ENCODE measurements at regions of chr2 and their contacts with region 1.

Region 1: GRCh38 chr2:158456309-158457066 is at the starts of genes CCDC148 and PKP4:
- DNase-seq: peak; percentile 93
- H3K4me3 Mint-ChIP-seq: peak within 1 kb of the TSS; percentile 91
- H3K27ac Mint-ChIP-seq: peak within 1 kb of the TSS; percentile 81
- H3K4me1 Mint-ChIP-seq: peaks cover 21% of the 10 kb centered on the region
- H3K27me3 Mint-ChIP-seq: no peaks in the 10 kb centered on the region
- CTCF ChIP-seq: no peak
- total RNA-seq, gene CCDC148: 4.3 and 5.1 TPM in 2 replicates
- total RNA-seq, gene PKP4: 119 and 137 TPM in 2 replicates

Region 2: DNA sequence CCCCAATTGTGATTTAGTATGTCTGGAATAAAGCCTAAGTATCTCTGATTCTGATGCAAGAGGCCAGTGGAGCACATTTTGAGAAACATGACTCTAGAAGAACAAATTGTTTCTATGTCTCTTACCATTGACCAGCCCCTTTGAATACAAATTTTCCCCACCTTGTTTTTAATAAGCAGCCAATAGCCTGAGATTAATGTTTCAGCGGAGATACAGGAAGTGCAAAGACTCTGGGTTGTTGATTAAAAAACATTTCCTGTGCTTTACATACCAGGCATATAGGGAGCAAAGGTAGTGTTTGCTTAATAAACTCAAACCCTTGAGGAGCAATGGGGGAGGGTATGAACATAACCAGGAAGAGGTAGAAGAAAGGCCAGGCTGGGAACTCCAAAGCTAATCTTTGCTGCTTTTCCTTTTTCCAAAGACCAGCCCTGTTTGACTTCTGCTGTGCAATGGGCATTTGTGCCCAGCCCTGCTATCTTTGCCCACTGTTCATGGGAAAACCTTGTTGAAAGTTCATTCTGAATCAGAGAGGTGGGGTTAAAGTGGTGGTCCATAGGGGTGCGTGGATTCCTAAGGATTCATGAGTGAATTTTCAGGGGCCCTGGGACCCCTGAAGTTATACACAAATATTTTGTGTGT is 325.5 kb before region 1 on chr2:
- CTCF ChIA-PET with region 1: no interaction called
- intact Hi-C with region 1: loop called (anchors 5 kb)
- DNase-seq: peak; percentile 65
- H3K4me3 Mint-ChIP-seq: peak overlapping the region; percentile 38
- H3K27ac Mint-ChIP-seq: peak overlapping the region; percentile 93
- H3K4me1 Mint-ChIP-seq: peaks cover 79% of the 10 kb centered on the region
- H3K27me3 Mint-ChIP-seq: no peaks in the 10 kb centered on the region
- CTCF ChIP-seq: no peak

Region 3: DNA sequence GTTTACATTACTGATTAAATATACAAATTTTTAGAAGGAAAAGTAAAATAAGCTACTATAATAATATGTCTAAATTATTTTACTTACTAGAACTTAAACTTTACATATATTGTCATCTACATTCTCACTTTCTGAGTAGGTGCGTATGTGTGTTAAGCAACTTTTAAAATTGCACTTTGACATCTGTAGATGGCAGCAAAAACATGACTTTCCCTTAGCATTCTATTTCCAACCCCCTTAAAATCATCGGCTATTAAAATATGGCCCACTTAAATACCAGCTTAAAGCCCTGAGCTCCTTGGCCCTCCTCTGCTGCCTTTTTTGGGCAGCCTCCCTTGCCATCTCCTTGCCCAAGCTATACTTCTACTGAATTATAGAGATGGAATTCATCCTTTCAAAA is 276.8 kb before region 1 on chr2:
- CTCF ChIA-PET with region 1: interaction called, 13 read pairs
- intact Hi-C with region 1: loop called (anchors 5 kb)
- DNase-seq: no peak
- H3K4me3 Mint-ChIP-seq: no peak overlapping the region
- H3K27ac Mint-ChIP-seq: no peak overlapping the region
- H3K4me1 Mint-ChIP-seq: peaks cover 28% of the 10 kb centered on the region
- H3K27me3 Mint-ChIP-seq: no peaks in the 10 kb centered on the region
- CTCF ChIP-seq: peak; percentile 42

Region 4: GRCh38 chr2:158395166-158395565 is 61.3 kb before region 1 on chr2:
- CTCF ChIA-PET with region 1: no interaction called
- intact Hi-C with region 1: loop called (anchors 1 kb)
- DNase-seq: peak; percentile 50
- H3K4me3 Mint-ChIP-seq: peak overlapping the region; percentile 20
- H3K27ac Mint-ChIP-seq: peak overlapping the region; percentile 88
- H3K4me1 Mint-ChIP-seq: peaks cover 41% of the 10 kb centered on the region
- H3K27me3 Mint-ChIP-seq: no peaks in the 10 kb centered on the region
- CTCF ChIP-seq: no peak

Region 5: GRCh38 chr2:158497486-158497885 is 41.0 kb after region 1 on chr2:
- CTCF ChIA-PET with region 1: interaction called, 5 read pairs
- intact Hi-C with region 1: loop called (anchors 2 kb)
- DNase-seq: peak; percentile 22
- H3K4me3 Mint-ChIP-seq: peak overlapping the region; percentile 14
- H3K27ac Mint-ChIP-seq: peak overlapping the region; percentile 90
- H3K4me1 Mint-ChIP-seq: peaks cover 76% of the 10 kb centered on the region
- H3K27me3 Mint-ChIP-seq: no peaks in the 10 kb centered on the region
- CTCF ChIP-seq: no peak

Region 6: GRCh38 chr2:158845859-158846258 is 389.4 kb after region 1 on chr2:
- CTCF ChIA-PET with region 1: no interaction called
- intact Hi-C with region 1: no loop called
- DNase-seq: no peak
- H3K4me3 Mint-ChIP-seq: no peak overlapping the region
- H3K27ac Mint-ChIP-seq: no peak overlapping the region
- H3K4me1 Mint-ChIP-seq: no peaks in the 10 kb centered on the region
- H3K27me3 Mint-ChIP-seq: peaks cover 26% of the 10 kb centered on the region
- CTCF ChIP-seq: no peak

Measured in Calu3 (cell line).